Common myeloid progenitor, CD34-positive (primary cell): ENCODE measurements at regions of chr10 and their contacts with region 1.

Region 1: GRCh38 chr10:92689663-92690210 is at the start of gene HHEX:
- DNase-seq: peak; percentile 75 to 91 (median 84)
- H3K4me3 ChIP-seq: peak within 1 kb of the TSS; percentile 72 to 86 (median 76)
- H3K27ac ChIP-seq: peak within 1 kb of the TSS; percentile 88 to 95
- H3K4me1 ChIP-seq: peaks cover 21 to 54% (median 37%) of the 10 kb centered on the region in 4 experiments
- H3K27me3 ChIP-seq: no peaks in the 10 kb centered on the region

Region 2: DNA sequence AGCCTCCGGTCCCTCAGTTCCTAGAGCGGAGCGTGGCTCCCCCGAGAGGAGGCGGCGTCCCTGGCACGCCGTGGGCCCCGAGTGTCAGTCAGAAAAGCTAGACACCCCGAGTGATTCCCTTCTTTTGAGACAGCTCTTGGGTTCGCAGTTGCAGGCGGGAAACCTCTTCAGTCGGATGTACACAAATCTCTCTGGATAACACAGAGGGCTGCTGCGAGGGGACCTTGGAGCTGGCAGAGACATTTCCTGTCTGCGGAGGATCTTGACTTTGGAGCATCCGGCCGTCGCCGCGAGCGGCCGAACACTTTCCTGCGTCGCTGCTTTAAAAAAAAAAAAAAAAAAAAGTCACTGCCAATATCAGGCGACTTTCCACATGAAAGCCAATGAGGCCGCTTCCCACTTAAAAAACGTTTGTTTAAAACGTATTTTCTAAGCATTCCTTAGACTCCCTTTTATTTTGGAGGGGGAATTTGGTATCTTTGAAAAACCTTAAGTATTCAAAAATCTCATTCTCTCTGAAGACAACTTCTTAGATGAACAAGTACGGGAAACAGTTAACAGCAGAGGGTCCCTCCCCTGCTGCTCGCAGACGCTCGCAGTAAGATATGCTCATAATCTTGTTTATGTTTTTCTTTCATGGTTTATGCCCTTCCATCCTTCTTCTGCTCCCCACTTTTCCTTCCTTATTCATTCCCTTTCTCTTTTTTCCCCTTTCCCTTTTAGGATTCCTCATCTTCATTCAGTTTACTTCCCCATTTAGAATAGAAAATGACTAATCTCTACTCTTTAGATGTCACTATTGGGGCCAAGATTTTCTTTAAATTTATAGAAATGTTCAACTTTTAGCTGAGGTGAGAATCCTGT is 10.0 kb after region 1 on chr10:
- CTCF ChIA-PET with region 1: interaction called, 6 read pairs
- POLR2A ChIA-PET with region 1: interaction called, 17 read pairs
- DNase-seq: peak; percentile 39 to 67 (median 52)
- H3K4me3 ChIP-seq: peak overlapping the region in 6 of 7 experiments; percentile 48 to 73 (median 66)
- H3K27ac ChIP-seq: peak overlapping the region in 1 of 2 experiments; percentile 62
- H3K4me1 ChIP-seq: peaks cover 18 to 56% (median 47%) of the 10 kb centered on the region in 4 experiments
- H3K27me3 ChIP-seq: no peaks in the 10 kb centered on the region

Region 3: DNA sequence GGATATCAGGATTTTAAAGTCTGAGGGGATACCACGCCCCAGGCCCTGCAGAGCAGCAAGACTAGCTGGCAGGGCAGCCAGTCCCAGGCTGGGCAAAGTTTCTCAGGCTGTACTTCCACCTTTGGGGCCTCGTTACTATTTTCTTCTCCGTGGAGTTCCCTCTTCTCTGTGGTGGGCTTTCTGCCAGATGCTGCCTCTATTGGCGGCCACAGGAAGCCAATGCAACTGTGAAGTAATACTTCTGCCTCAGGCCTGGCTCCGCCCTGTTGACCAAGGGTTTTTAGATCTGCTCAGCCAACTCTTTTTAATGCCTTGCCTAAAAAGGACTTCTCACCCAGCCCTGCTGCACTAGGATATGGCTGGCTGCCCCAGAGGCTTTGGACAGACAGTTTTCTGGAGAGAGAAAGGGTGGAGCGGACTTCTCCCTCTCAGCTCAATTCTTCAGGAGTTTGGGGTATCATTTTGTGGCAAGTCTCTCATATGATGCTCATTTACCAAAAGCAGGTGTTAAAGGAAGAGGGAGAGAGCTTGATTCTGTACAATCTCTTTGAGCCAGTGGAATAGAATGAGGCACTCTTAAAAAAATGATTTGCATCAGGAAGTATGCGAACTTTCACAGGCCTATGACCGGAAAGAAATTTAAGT is 67.5 kb after region 1 on chr10:
- CTCF ChIA-PET with region 1: interaction called, 25 read pairs
- POLR2A ChIA-PET with region 1: interaction called, 38 read pairs
- DNase-seq: peak; percentile 87 to 95 (median 93)
- H3K4me3 ChIP-seq: peak overlapping the region in 5 of 7 experiments; percentile 14 to 69 (median 42)
- H3K27ac ChIP-seq: peak overlapping the region; percentile 48 to 84
- H3K4me1 ChIP-seq: peaks cover 54 to 80% (median 72%) of the 10 kb centered on the region in 4 experiments
- H3K27me3 ChIP-seq: no peaks in the 10 kb centered on the region

Region 4: GRCh38 chr10:92822060-92822634 is 132.4 kb after region 1 on chr10:
- CTCF ChIA-PET with region 1: interaction called, 3 read pairs
- POLR2A ChIA-PET with region 1: interaction called, 16 read pairs
- DNase-seq: peak; percentile 80 to 93 (median 90)
- H3K4me3 ChIP-seq: peak overlapping the region in 3 of 7 experiments; percentile 3 to 56 (median 30)
- H3K27ac ChIP-seq: peak overlapping the region; percentile 46 to 50
- H3K4me1 ChIP-seq: peaks cover 6 to 30% (median 21%) of the 10 kb centered on the region in 4 experiments
- H3K27me3 ChIP-seq: no peaks in the 10 kb centered on the region

Region 5: GRCh38 chr10:92972066-92972870 is 282.5 kb after region 1 on chr10:
- CTCF ChIA-PET with region 1: no interaction called
- POLR2A ChIA-PET with region 1: no interaction called
- DNase-seq: peak in 2 of 3 donors; percentile 30 to 59
- H3K4me3 ChIP-seq: no peak overlapping the region
- H3K27ac ChIP-seq: peak overlapping the region in 1 of 2 experiments; percentile 57
- H3K4me1 ChIP-seq: no peaks in the 10 kb centered on the region
- H3K27me3 ChIP-seq: no peaks in the 10 kb centered on the region